Dendritic cell treated with granulocyte-macrophage colony-stimulating factor and Interleukin-4, amounts not matched to agents 40 ng/mL and 50 ng/mL, for 4 days (primary cell): ENCODE measurements at regions of chr10 and their contacts with region 1.

Region 1: GRCh38 chr10:35195361-35196306 is 69.0 kb downstream of the CREM start:
- H3K4me3 Mint-ChIP-seq: peak overlapping the region; percentile 75
- H3K27ac Mint-ChIP-seq: peak overlapping the region; percentile 99
- H3K4me1 Mint-ChIP-seq: peaks cover 45% of the 10 kb centered on the region
- H3K27me3 Mint-ChIP-seq: no peaks in the 10 kb centered on the region

Region 2: DNA sequence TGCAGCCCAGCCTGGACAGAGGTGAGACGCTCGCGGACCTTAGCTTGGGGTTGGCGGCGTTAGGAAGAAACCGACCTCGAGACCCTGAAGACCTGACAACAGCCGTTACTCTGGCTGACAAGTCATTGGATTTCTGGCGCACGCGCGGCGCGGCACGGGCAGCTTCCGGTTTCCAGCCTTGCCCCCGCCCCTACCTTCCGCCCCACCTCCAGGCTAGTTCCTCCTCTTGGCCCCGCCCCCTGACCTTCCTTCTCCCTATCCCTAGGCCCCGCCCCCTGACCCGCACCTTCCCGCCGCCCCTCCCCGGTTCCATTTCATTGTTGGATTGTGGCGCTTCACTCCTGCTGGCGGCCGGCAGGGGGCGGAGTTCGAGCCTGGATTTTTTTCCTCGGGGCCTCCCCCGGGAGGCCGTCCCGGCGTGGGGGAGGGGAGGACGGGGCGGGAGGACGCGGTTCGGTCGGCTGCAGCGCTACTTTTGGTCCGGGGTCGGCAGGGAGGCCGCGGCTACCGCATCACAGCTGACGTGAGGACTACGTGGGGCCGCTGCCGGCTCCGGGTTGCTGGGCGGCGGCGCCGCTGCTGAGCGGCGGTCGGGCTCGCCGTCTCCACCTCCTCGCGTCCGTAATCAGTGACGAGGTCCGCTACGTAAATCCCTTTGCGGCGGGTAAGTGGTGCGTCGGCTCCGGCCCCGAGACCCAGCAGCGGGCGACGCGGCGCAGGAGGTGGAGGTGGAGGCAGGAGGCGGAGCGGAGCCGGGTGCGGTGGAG is 68.9 kb before region 1 on chr10 and contains the start of gene CREM:
- intact Hi-C with region 1: loop called (anchors 1 kb)
- H3K4me3 Mint-ChIP-seq: peak within 1 kb of the TSS; percentile 84
- H3K27ac Mint-ChIP-seq: peak within 1 kb of the TSS; percentile 98
- H3K4me1 Mint-ChIP-seq: peaks cover 27% of the 10 kb centered on the region
- H3K27me3 Mint-ChIP-seq: no peaks in the 10 kb centered on the region

Region 3: GRCh38 chr10:35218339-35218955 is 22.8 kb after region 1 on chr10:
- intact Hi-C with region 1: loop called (anchors 2 kb)
- H3K4me3 Mint-ChIP-seq: peak overlapping the region; percentile 14
- H3K27ac Mint-ChIP-seq: peak overlapping the region; percentile 86
- H3K4me1 Mint-ChIP-seq: peaks cover 28% of the 10 kb centered on the region
- H3K27me3 Mint-ChIP-seq: peaks cover 2% of the 10 kb centered on the region